GM12878 (cell line): ENCODE measurements at regions of chr15 and their contacts with region 1.

Region 1: DNA sequence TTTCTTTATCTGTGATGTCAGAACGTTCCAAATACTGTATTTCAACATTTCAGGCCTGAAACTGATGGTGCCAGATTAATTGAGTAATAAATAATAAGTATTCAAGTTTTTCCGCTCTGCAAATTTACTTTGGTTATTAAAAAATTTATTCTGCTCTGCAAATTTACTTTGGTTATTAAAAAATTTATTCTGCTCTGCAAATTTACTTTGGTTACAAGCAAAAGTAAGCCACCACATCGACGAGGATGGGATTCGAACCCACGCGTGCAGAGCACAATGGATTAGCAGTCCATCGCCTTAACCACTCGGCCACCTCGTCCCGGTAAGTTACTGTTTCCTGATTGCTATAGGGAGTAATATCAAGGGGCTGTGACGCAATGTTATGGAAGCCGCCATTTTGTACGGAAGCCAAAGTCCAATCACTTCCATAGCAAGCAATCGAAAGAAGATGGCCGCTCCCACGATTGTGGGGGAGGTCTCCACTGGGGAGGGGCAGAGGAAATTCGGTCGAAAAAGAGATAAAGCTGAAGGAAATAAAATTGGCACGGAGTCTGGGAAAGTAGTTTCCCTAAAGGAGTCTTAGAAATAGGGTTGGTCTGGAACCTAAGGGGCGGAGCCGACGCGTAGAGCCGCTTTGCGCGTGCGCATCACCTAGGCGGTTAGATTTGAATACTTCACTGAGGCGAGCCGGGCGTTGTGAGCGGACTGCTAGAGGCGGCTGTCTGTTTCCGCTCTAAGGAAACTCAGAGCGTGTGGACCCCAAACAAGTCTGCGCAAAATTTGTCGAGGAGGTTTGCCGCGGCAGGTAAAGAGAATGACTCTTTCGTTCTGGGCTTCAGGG is at the start of gene KNL1:
- DNase-seq: peak; percentile 99
- ATAC-seq: peak; percentile 86
- H3K4me3 ChIP-seq: peak within 1 kb of the TSS; percentile 90
- H3K27ac ChIP-seq: peak within 1 kb of the TSS; percentile 98
- H3K4me1 ChIP-seq: peaks cover 9% of the 10 kb centered on the region; the same call in 1 of the 2 replicates
- H3K27me3 ChIP-seq: no peaks in the 10 kb centered on the region
- CTCF ChIP-seq: no peak
- EP300 ChIP-seq: peak in 1 of 2 experiments; percentile 83; a peak in 1 of 4 replicates
- POLR2A ChIP-seq: peak; percentile 68
- RAD21 ChIP-seq: no peak
- polyA plus RNA-seq, gene KNL1: 10.9 to 15.8 TPM

Region 2: GRCh38 chr15:39997031-39997430 is 596.8 kb before region 1 on chr15:
- CTCF ChIA-PET with region 1: no interaction called
- POLR2A ChIA-PET with region 1: no interaction called
- RAD21 ChIA-PET with region 1: no interaction called
- SMC1A ChIA-PET with region 1: no interaction called
- in situ Hi-C with region 1: no loop called
- intact Hi-C with region 1: no loop called
- DNase-seq: no peak
- ATAC-seq: no peak
- H3K4me3 ChIP-seq: no peak overlapping the region
- H3K27ac ChIP-seq: no peak overlapping the region
- H3K4me1 ChIP-seq: no peaks in the 10 kb centered on the region
- H3K27me3 ChIP-seq: no peaks in the 10 kb centered on the region
- CTCF ChIP-seq: no peak
- EP300 ChIP-seq: no peak
- POLR2A ChIP-seq: no peak
- RAD21 ChIP-seq: no peak

Region 3: DNA sequence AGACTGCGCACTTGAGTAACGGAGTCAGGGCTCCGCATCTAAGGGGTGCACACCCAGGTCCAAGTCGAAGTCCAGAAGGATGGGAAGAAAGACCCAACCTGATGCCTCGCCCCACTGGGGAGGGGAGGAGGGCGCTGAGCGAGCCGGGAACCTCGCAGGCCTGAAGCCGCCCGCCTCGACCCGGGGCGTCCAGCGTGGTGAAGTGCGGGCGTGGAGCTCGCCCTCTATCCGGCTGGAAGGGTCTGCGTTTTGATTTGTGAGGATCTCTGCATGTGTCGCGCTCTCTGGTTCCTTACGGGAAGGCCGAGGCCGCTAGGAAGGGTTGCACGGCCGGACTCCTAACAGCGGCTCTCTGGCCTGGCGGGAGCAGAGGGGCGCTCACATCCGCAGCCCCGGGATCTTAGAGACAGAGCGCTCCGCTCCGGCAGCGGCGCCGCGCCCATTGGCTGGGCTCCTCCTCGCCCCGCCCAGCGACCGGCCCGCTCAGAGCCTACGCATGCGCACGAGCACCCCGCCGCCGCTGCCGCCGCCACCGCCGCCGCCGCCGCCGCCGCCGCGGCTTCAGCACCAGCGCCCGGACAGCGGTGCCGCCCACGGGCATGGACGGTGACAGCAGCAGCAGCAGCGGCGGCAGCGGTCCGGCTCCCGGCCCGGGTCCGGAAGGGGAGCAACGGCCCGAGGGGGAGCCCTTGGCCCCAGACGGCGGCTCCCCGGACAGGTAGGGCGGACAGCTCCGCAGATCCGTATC is 235.9 kb before region 1 on chr15 and contains the start of gene DISP2:
- CTCF ChIA-PET with region 1: no interaction called
- POLR2A ChIA-PET with region 1: no interaction called
- RAD21 ChIA-PET with region 1: no interaction called
- SMC1A ChIA-PET with region 1: no interaction called
- in situ Hi-C with region 1: no loop called
- intact Hi-C with region 1: no loop called
- DNase-seq: no peak
- ATAC-seq: peak; percentile 94
- H3K4me3 ChIP-seq: peak within 1 kb of the TSS; percentile 68; the same call in 1 of the 2 replicates
- H3K27ac ChIP-seq: no peak within 1 kb of the TSS
- H3K4me1 ChIP-seq: peaks cover 5% of the 10 kb centered on the region; the same call in 1 of the 2 replicates
- H3K27me3 ChIP-seq: peaks cover 0 to 6% of the 10 kb centered on the region in 2 experiments; a peak in 3 of 4 replicates
- CTCF ChIP-seq: no peak
- EP300 ChIP-seq: no peak
- POLR2A ChIP-seq: no peak; the same call in 1 of the 2 replicates
- RAD21 ChIP-seq: no peak
- polyA plus RNA-seq, gene DISP2: under 0.01 to 0.20 TPM

Region 4: GRCh38 chr15:40525855-40526254 is 68.0 kb before region 1 on chr15:
- CTCF ChIA-PET with region 1: interaction called, 10 read pairs
- POLR2A ChIA-PET with region 1: no interaction called
- RAD21 ChIA-PET with region 1: interaction called, 5 read pairs
- SMC1A ChIA-PET with region 1: interaction called, 24 read pairs
- in situ Hi-C with region 1: no loop called
- intact Hi-C with region 1: no loop called
- DNase-seq: no peak
- ATAC-seq: no peak
- H3K4me3 ChIP-seq: no peak overlapping the region
- H3K27ac ChIP-seq: no peak overlapping the region
- H3K4me1 ChIP-seq: peaks cover 6% of the 10 kb centered on the region
- H3K27me3 ChIP-seq: no peaks in the 10 kb centered on the region
- CTCF ChIP-seq: no peak
- EP300 ChIP-seq: no peak
- POLR2A ChIP-seq: no peak
- RAD21 ChIP-seq: no peak

Region 5: GRCh38 chr15:40550341-40551037 is 43.3 kb before region 1 on chr15:
- CTCF ChIA-PET with region 1: interaction called, 10 read pairs
- POLR2A ChIA-PET with region 1: interaction called, 5 read pairs
- RAD21 ChIA-PET with region 1: interaction called, 5 read pairs
- SMC1A ChIA-PET with region 1: interaction called, 6 read pairs
- in situ Hi-C with region 1: no loop called
- intact Hi-C with region 1: loop called (anchors 5 kb)
- DNase-seq: peak; percentile 94
- ATAC-seq: peak; percentile 89
- H3K4me3 ChIP-seq: peak overlapping the region; percentile 17; the same call in 1 of the 2 replicates
- H3K27ac ChIP-seq: peak overlapping the region; percentile 89
- H3K4me1 ChIP-seq: peaks cover 78% of the 10 kb centered on the region
- H3K27me3 ChIP-seq: no peaks in the 10 kb centered on the region
- CTCF ChIP-seq: no peak
- EP300 ChIP-seq: peak; percentile 93 to 95
- POLR2A ChIP-seq: no peak
- RAD21 ChIP-seq: no peak

Region 6: GRCh38 chr15:40564591-40565332 is 29.0 kb before region 1 on chr15 and contains the start of gene CCDC32:
- CTCF ChIA-PET with region 1: interaction called, 56 read pairs
- POLR2A ChIA-PET with region 1: interaction called, 21 read pairs
- RAD21 ChIA-PET with region 1: interaction called, 17 read pairs
- SMC1A ChIA-PET with region 1: interaction called, 17 read pairs
- in situ Hi-C with region 1: no loop called
- intact Hi-C with region 1: loop called (anchors 5 kb)
- DNase-seq: peak; percentile 97
- ATAC-seq: peak; percentile 96
- H3K4me3 ChIP-seq: peak within 1 kb of the TSS; percentile 82
- H3K27ac ChIP-seq: peak within 1 kb of the TSS; percentile 97
- H3K4me1 ChIP-seq: peaks cover 8% of the 10 kb centered on the region
- H3K27me3 ChIP-seq: no peaks in the 10 kb centered on the region
- CTCF ChIP-seq: no peak
- EP300 ChIP-seq: 0 out of 4 replicates have a peak, but pooled peaks of 1 of the 2 experiments have one; percentile 23
- POLR2A ChIP-seq: peak; percentile 90
- RAD21 ChIP-seq: no peak
- polyA plus RNA-seq, gene CCDC32: 67.0 to 74.3 TPM

Region 7: GRCh38 chr15:40650479-40650878 is 56.7 kb after region 1 on chr15:
- CTCF ChIA-PET with region 1: interaction called, 12 read pairs
- POLR2A ChIA-PET with region 1: no interaction called
- RAD21 ChIA-PET with region 1: no interaction called
- SMC1A ChIA-PET with region 1: interaction called, 8 read pairs
- in situ Hi-C with region 1: no loop called
- intact Hi-C with region 1: no loop called
- DNase-seq: no peak
- ATAC-seq: no peak
- H3K4me3 ChIP-seq: no peak overlapping the region
- H3K27ac ChIP-seq: no peak overlapping the region
- H3K4me1 ChIP-seq: no peaks in the 10 kb centered on the region
- H3K27me3 ChIP-seq: no peaks in the 10 kb centered on the region
- CTCF ChIP-seq: no peak
- EP300 ChIP-seq: no peak
- POLR2A ChIP-seq: no peak
- RAD21 ChIP-seq: no peak

Region 8: DNA sequence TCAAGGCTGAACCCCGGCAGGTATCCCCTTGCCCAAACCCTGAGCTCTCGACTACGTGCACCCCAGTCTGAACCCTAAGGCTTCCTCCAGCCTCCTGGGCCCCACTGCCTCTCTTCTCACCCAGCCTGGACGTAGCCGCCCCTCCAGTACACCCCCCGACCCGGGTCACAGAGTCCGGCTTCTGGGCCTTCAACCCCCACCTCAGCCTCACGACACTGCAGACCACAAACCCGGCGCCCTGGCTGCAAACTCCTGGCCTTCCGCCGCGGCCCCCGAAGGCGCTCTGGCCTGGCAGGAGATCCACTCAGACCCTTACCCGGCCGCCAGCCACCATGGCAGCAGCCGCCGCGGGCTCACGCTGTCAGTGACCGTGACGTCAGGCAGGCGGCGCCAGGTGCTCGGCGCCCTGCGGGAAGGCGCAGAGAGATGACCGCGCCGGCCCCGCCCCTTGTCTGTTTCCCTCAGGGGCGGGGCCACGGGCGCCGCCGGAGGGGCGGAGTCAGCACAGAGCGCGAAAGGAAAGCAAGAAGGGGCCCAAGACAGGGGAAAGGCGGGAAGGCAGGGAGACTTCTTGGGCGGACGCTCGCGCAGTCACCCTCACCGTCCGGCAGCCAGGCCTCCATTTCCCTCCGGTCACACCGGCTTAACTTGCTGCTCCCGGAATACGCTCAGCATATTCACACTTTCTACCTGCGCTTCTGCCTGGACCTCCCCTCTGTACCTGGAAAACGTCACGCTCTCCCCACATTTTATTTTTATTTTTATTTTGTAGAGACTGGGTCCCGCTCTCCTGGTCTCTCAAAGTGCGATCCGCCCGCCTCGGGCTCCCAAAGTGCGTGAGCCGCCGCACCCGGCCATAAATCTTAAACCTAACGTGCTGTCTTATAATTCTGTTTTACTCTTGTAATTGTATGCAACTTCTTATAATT is 161.3 kb after region 1 on chr15 and contains the start of gene RMDN3:
- CTCF ChIA-PET with region 1: no interaction called
- POLR2A ChIA-PET with region 1: no interaction called
- RAD21 ChIA-PET with region 1: interaction called, 4 read pairs
- SMC1A ChIA-PET with region 1: no interaction called
- in situ Hi-C with region 1: no loop called
- intact Hi-C with region 1: loop called (anchors 5 kb)
- DNase-seq: peak; percentile 69
- ATAC-seq: peak; percentile 89
- H3K4me3 ChIP-seq: peak within 1 kb of the TSS; percentile 91
- H3K27ac ChIP-seq: peak within 1 kb of the TSS; percentile 86
- H3K4me1 ChIP-seq: peaks cover 3% of the 10 kb centered on the region
- H3K27me3 ChIP-seq: no peaks in the 10 kb centered on the region
- CTCF ChIP-seq: no peak
- EP300 ChIP-seq: no peak; a peak in 1 of 4 replicates
- POLR2A ChIP-seq: peak; percentile 93
- RAD21 ChIP-seq: no peak
- polyA plus RNA-seq, gene RMDN3: 5.7 to 10.2 TPM

Region 9: GRCh38 chr15:41648770-41649169 is 1055.0 kb after region 1 on chr15:
- CTCF ChIA-PET with region 1: no interaction called
- POLR2A ChIA-PET with region 1: no interaction called
- RAD21 ChIA-PET with region 1: no interaction called
- SMC1A ChIA-PET with region 1: no interaction called
- in situ Hi-C with region 1: no loop called
- intact Hi-C with region 1: no loop called
- DNase-seq: no peak
- ATAC-seq: no peak
- H3K4me3 ChIP-seq: no peak overlapping the region
- H3K27ac ChIP-seq: no peak overlapping the region
- H3K4me1 ChIP-seq: no peaks in the 10 kb centered on the region
- H3K27me3 ChIP-seq: no peaks in the 10 kb centered on the region
- CTCF ChIP-seq: no peak
- EP300 ChIP-seq: no peak
- POLR2A ChIP-seq: no peak
- RAD21 ChIP-seq: no peak